ENCODE measurements at regions of chr1 and their contacts with region 1.

Region 1: GRCh38 chr1:84781946-84782771 is 91.9 kb upstream of the SSX2IP start:
- DNase-seq: peak; percentile 91
- ATAC-seq: peak; percentile 95
- H3K4me3 Mint-ChIP-seq: peak overlapping the region; percentile 54
- H3K27ac Mint-ChIP-seq: peak overlapping the region; percentile 64
- H3K4me1 Mint-ChIP-seq: peaks cover 15% of the 10 kb centered on the region
- H3K27me3 Mint-ChIP-seq: no peaks in the 10 kb centered on the region
- CTCF ChIP-seq: peak; percentile 80

Region 2: GRCh38 chr1:84683508-84683907 is 98.7 kb before region 1 on chr1:
- CTCF ChIA-PET with region 1: no interaction called
- POLR2A ChIA-PET with region 1: no interaction called
- DNase-seq: no peak
- ATAC-seq: no peak
- H3K4me3 Mint-ChIP-seq: no peak overlapping the region
- H3K27ac Mint-ChIP-seq: no peak overlapping the region
- H3K4me1 Mint-ChIP-seq: peaks cover 41% of the 10 kb centered on the region
- H3K27me3 Mint-ChIP-seq: no peaks in the 10 kb centered on the region
- CTCF ChIP-seq: no peak

Region 3: DNA sequence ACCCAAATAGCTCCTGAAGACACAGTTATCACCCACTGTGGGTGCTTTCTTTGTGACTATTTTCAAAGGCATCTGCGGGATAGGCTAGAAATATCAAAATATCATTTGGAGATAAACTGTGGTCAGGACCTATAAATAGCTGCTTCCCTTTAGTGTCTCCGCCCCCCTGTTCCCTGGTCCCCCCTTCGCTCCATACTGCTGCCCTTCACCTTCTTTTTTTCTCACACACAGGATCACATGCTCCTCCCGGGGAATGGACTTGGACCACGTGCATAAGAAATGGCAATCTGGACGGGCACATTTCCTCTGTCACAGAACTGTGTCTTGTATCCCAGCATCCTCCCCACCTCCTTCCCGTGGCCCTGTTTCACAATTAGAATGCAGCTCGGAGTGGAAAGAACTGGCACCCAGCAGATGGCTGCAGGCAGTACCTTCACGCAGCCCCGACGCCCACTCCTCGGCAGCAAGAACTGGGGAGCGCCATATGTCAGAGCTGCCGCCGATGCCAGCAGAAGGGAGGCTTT is 23.1 kb before region 1 on chr1:
- CTCF ChIA-PET with region 1: interaction called, 16 read pairs
- POLR2A ChIA-PET with region 1: no interaction called
- DNase-seq: no peak
- ATAC-seq: no peak
- H3K4me3 Mint-ChIP-seq: no peak overlapping the region
- H3K27ac Mint-ChIP-seq: no peak overlapping the region
- H3K4me1 Mint-ChIP-seq: peaks cover 48% of the 10 kb centered on the region
- H3K27me3 Mint-ChIP-seq: no peaks in the 10 kb centered on the region; the same call in 1 of the 2 replicates
- CTCF ChIP-seq: no peak

Region 4: GRCh38 chr1:84795966-84796600 is 13.9 kb after region 1 on chr1:
- CTCF ChIA-PET with region 1: interaction called, 19 read pairs
- POLR2A ChIA-PET with region 1: no interaction called
- DNase-seq: no peak
- ATAC-seq: no peak
- H3K4me3 Mint-ChIP-seq: no peak overlapping the region
- H3K27ac Mint-ChIP-seq: no peak overlapping the region
- H3K4me1 Mint-ChIP-seq: no peaks in the 10 kb centered on the region
- H3K27me3 Mint-ChIP-seq: no peaks in the 10 kb centered on the region
- CTCF ChIP-seq: no peak

Region 5: GRCh38 chr1:84810343-84810742 is 28.2 kb after region 1 on chr1:
- CTCF ChIA-PET with region 1: interaction called, 13 read pairs
- POLR2A ChIA-PET with region 1: no interaction called
- DNase-seq: no peak
- ATAC-seq: no peak
- H3K4me3 Mint-ChIP-seq: no peak overlapping the region
- H3K27ac Mint-ChIP-seq: no peak overlapping the region
- H3K4me1 Mint-ChIP-seq: no peaks in the 10 kb centered on the region
- H3K27me3 Mint-ChIP-seq: no peaks in the 10 kb centered on the region
- CTCF ChIP-seq: no peak

Region 6: GRCh38 chr1:84892705-84893618 is 110.8 kb after region 1 on chr1 and contains the start of gene LPAR3:
- CTCF ChIA-PET with region 1: interaction called, 18 read pairs
- POLR2A ChIA-PET with region 1: interaction called, 3 read pairs
- DNase-seq: peak; percentile 82
- ATAC-seq: peak; percentile 82
- H3K4me3 Mint-ChIP-seq: peak within 1 kb of the TSS; percentile 84
- H3K27ac Mint-ChIP-seq: peak within 1 kb of the TSS; percentile 63
- H3K4me1 Mint-ChIP-seq: peaks cover 60% of the 10 kb centered on the region
- H3K27me3 Mint-ChIP-seq: peaks cover 21% of the 10 kb centered on the region
- CTCF ChIP-seq: no peak
- total RNA-seq, gene LPAR3: 26.8 to 33.3 TPM (median 27.6 TPM) in 3 replicates

Region 7: DNA sequence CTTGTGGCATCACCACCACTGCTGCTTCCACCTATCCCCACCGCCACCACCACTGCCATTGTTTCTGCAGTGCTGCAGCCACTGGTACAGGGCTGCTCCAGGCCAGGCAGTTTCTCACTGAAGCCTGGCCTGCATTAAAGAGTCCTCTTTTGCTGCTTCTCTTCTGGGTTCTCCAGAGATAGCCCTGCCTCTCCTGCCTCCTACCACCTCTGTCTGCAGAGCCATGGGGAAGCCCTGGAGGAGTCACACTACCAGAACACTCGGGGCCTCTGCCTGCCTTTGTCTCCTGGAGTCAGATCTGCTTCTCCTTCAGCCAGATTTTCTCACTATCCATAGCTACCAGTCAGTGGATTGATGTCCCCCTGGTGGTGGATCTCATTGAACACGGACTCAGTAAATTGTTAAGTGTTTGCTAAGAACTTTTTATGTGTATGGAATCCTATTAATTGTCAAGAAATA is 720.5 kb after region 1 on chr1:
- CTCF ChIA-PET with region 1: no interaction called
- POLR2A ChIA-PET with region 1: no interaction called
- DNase-seq: peak; percentile 58
- ATAC-seq: peak; percentile 97
- H3K4me3 Mint-ChIP-seq: no peak overlapping the region
- H3K27ac Mint-ChIP-seq: peak overlapping the region; percentile 2; the same call in 1 of the 2 replicates
- H3K4me1 Mint-ChIP-seq: peaks cover 5% of the 10 kb centered on the region
- H3K27me3 Mint-ChIP-seq: peaks cover 7% of the 10 kb centered on the region
- CTCF ChIP-seq: peak; percentile 30; the same call in 1 of the 2 replicates

Measured in WTC11 (cell line).